Activated T-helper 1 cell treated with anti-CD3 and anti-CD28 coated beads, Interleukin-12 subunit alpha, Interleukin-12 subunit beta, Interleukin-2, Interleukin-4 antibody, amounts not matched to agents 30 ng/mL and 10 ng/mL and 1 ng/mL, durations not matched to agents 14 hours and 24 hours and 36 hours (primary cell): ENCODE measurements at regions of chr1 and their contacts with region 1.

Region 1: DNA sequence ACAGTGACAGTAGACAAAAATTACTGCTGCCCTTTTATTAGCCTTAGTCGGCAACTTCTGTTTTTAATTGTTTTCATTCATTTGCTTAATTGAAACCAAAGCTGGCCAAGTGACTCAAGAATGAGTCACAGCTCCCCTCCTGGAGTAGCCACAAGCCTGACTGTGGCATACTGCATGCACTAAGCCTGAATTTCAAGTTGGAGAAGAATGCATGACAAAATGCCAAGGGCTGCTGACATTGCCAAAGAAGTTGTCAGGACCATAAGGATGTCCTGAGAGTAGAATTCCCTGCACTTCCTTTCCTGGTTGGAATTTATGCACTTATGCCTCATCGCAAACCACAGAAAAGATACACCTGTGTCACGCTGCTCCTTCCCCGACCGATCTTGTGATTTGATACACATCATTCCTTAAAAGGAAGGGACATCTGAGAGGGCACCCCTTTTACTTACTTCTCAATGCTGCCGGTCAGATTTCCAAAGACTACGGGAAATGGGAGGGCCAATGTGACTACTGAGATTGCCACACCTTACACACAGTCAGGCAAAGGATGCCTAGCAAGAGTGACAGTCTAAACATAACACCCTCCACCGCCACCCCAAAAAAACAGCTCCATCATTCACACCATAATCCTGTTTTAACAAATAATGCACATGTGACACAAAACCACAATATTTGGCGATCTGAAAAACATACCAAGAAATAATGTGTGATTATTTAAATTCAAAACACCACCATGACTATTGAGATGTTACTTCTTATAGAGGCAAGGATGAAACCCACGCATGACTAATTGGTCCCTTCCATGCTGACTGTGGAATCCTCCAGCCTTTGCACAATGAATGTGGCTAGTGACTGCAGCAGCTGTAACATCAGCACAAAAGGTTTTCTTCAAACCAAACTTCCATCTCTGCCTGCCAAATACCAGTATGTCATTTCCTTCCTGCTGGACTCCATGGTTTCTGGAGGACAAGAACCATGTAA is 28.2 kb downstream of the VAV3 start:
- DNase-seq: no peak
- H3K4me3 Mint-ChIP-seq: peak overlapping the region; percentile 70
- H3K27ac Mint-ChIP-seq: peak overlapping the region; percentile 83
- H3K4me1 Mint-ChIP-seq: peaks cover 57% of the 10 kb centered on the region
- H3K27me3 Mint-ChIP-seq: no peaks in the 10 kb centered on the region

Region 2: DNA sequence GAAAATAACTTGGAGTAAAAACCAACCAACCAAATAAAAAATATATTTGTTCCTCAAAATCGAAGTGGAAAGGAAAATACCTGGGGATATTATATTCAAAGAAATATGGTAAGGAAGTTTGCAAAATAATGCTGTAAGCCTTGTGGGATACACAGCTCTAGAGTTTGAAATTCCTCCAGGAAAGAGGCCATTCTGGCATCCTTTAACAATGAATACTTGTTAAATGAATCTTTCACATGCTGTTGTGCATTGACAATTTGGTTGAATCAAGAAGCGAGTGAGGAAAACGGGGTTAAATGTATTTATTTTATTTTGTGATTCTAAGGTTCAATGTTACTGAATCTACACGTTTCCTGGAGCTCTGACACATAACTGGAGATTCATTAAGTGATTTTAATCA is 826.5 kb before region 1 on chr1:
- intact Hi-C with region 1: no loop called
- DNase-seq: no peak
- H3K4me3 Mint-ChIP-seq: no peak overlapping the region
- H3K27ac Mint-ChIP-seq: no peak overlapping the region
- H3K4me1 Mint-ChIP-seq: no peaks in the 10 kb centered on the region
- H3K27me3 Mint-ChIP-seq: no peaks in the 10 kb centered on the region

Region 3: GRCh38 chr1:107820805-107821204 is 116.0 kb before region 1 on chr1:
- intact Hi-C with region 1: loop called (anchors 1 kb)
- DNase-seq: no peak
- H3K4me3 Mint-ChIP-seq: no peak overlapping the region
- H3K27ac Mint-ChIP-seq: no peak overlapping the region
- H3K4me1 Mint-ChIP-seq: peaks cover 16% of the 10 kb centered on the region
- H3K27me3 Mint-ChIP-seq: peaks cover 6% of the 10 kb centered on the region

Region 4: DNA sequence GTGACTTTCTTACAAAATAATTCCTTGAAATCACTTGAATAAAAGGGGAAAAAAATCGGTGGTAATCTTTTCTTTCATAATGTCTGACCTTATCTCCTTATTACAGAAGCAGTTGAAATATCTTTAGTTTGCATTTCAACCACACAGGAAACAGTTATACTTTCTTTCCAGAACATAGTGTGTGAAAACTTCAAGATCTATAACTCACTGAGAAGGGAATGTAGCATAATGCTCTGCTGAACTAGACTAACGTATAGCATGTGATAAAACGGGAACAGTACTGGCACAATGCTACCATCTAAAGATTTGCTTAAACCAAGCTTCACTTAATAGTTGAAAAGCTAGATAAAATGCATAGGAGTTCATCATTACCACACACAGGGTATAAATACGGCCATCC is 16.8 kb before region 1 on chr1:
- intact Hi-C with region 1: loop called (anchors 1 kb)
- DNase-seq: no peak
- H3K4me3 Mint-ChIP-seq: no peak overlapping the region
- H3K27ac Mint-ChIP-seq: no peak overlapping the region
- H3K4me1 Mint-ChIP-seq: peaks cover 16% of the 10 kb centered on the region
- H3K27me3 Mint-ChIP-seq: no peaks in the 10 kb centered on the region

Region 5: GRCh38 chr1:107952989-107953388 is 16.2 kb after region 1 on chr1:
- intact Hi-C with region 1: no loop called
- DNase-seq: no peak
- H3K4me3 Mint-ChIP-seq: no peak overlapping the region
- H3K27ac Mint-ChIP-seq: no peak overlapping the region
- H3K4me1 Mint-ChIP-seq: peaks cover 7% of the 10 kb centered on the region
- H3K27me3 Mint-ChIP-seq: no peaks in the 10 kb centered on the region

Region 6: GRCh38 chr1:108041360-108042142 is 104.8 kb after region 1 on chr1:
- intact Hi-C with region 1: loop called (anchors 2 kb)
- DNase-seq: no peak
- H3K4me3 Mint-ChIP-seq: no peak overlapping the region
- H3K27ac Mint-ChIP-seq: no peak overlapping the region
- H3K4me1 Mint-ChIP-seq: peaks cover 30% of the 10 kb centered on the region
- H3K27me3 Mint-ChIP-seq: no peaks in the 10 kb centered on the region

Region 7: DNA sequence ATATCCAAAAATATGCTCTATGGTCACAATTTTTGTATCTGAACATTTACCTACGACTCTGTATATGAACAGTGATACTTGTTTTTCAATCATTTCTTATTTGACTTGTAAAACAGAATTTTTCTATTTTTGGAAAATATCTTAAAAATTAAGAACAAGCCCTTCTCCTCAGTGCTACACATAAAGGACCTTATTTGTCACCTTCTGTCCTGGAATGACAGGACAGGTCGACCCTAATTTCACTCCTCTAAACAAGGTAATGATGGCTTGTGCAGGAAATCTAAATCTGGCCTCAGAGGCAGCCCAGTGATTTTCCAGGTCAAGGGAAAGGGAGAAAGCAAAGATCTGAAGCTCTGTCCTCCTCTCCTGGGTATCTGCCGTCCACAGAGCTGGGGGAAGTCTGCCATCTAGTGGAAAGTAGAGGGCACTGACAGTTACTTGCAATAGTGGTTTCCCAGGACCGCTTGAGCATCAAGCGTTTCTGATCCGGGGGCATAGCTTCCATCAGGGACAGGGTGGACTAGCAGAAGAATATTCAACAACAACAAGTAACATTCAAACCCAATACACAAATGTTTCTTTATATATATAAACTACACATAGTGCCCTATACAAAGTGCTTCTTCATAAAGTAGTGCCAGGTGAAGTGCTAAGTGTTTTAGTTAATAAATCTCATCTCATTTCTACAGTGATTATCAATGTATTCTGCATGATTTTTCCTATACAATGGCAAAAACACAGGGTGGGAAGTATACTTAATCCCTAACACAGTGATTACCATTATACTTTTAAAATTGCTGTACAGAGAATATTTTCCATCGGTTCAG is 188.7 kb after region 1 on chr1:
- intact Hi-C with region 1: loop called (anchors 2 kb)
- DNase-seq: peak; percentile 40
- H3K4me3 Mint-ChIP-seq: no peak overlapping the region
- H3K27ac Mint-ChIP-seq: no peak overlapping the region
- H3K4me1 Mint-ChIP-seq: no peaks in the 10 kb centered on the region
- H3K27me3 Mint-ChIP-seq: peaks cover 3% of the 10 kb centered on the region

Region 8: GRCh38 chr1:108182959-108183700 is 246.3 kb after region 1 on chr1:
- intact Hi-C with region 1: no loop called
- DNase-seq: no peak
- H3K4me3 Mint-ChIP-seq: no peak overlapping the region
- H3K27ac Mint-ChIP-seq: no peak overlapping the region
- H3K4me1 Mint-ChIP-seq: peaks cover 4% of the 10 kb centered on the region
- H3K27me3 Mint-ChIP-seq: no peaks in the 10 kb centered on the region